ENCODE measurements at regions of chr1 and their contacts with region 1.

Region 1: DNA sequence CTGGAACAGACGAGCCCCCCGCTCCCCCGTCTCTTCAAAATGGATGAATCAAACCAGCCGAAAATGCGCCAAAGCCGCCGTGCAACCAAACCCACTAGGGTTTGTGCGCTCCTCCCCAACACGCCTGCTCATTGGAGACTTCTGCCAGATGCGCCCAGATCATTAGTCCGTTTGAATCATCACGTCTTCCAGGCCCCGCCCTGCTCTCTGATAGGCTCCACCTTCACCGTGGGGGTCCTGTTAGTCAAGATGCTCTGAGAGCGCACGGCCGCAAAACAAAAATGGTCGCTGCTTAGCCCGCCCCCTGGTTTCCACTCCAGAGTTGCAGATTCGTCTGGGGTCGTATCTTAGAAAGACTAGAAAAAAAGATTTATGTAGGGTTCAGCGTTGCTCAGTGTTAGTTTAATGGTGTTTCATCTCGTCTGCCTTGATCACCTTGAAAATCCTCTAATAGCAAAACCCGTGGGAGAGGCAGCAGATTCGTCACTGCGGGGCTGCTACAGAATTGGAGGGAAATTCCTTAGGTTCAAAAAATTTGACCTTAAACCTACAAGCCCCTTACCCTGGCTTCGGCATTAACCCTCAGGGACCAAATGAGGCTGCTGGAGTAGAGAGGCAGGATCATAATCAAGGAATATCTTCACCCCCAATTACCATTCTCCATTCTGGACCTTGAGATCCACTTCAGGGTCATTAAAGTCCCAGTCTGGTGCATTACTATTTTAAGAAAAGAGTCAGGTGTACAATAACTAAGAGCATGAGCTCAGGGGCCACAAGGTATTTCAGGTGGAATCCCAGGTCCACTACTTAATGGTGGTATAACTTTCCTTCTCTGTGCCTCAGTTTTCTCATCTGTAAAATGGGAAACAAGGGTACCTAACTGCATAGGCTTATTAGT is at the start of gene NUCKS1:
- DNase-seq: peak; percentile 90
- ATAC-seq: peak; percentile 84
- H3K4me3 Mint-ChIP-seq: peak within 1 kb of the TSS; percentile 99
- H3K27ac Mint-ChIP-seq: peak within 1 kb of the TSS; percentile 100
- H3K4me1 Mint-ChIP-seq: peaks cover 37% of the 10 kb centered on the region
- H3K27me3 Mint-ChIP-seq: no peaks in the 10 kb centered on the region
- total RNA-seq, gene NUCKS1: 200 to 211 TPM

Region 2: DNA sequence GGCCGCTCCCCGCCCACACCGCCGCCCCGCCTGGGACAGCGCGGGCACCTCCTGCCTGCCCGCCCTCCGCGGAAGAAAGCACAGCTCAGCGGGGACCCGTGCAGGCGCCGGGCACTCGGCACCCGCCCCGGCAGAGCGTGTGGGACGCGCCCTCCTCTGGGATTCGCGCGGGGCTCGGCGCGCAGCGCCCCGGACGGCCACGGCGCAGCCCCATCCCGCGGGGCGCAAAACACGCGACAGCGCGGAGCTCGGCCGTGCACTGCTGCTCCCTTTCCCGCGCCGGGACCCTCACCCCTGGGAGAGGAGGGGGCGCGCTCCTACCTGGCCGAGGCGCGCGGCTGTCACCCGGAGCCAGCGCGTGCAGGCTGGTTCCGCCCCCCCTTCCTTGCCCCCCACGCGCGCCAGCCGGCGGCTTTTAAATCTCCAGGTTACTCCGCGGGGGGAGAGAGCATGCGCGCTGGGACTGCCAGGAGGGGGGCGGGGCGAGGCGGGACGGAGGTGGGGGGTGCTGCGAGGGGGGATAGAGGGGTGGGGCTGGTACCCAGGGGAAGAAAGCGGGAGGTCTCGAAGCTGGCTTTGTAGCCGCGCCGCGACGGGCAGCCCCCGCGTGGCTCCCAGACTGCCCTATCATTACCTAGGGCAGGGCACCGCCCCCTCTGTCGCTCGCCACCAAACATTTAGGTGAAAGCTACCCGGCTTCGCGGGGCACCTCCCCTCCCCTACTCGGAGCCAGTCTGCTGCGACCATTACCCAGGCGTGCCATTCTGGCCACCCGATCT is 70.1 kb before region 1 on chr1 and contains the start of gene SLC45A3:
- POLR2A ChIA-PET with region 1: no interaction called
- DNase-seq: peak; percentile 59
- ATAC-seq: peak; percentile 77
- H3K4me3 Mint-ChIP-seq: peak within 1 kb of the TSS; percentile 84
- H3K27ac Mint-ChIP-seq: no peak within 1 kb of the TSS
- H3K4me1 Mint-ChIP-seq: peaks cover 7% of the 10 kb centered on the region
- H3K27me3 Mint-ChIP-seq: peaks cover 27% of the 10 kb centered on the region
- total RNA-seq, gene SLC45A3: 0.17 to 0.31 TPM

Region 3: GRCh38 chr1:205782627-205783412 is 32.4 kb after region 1 on chr1:
- POLR2A ChIA-PET with region 1: interaction called, 43 read pairs
- DNase-seq: no peak
- ATAC-seq: peak; percentile 97
- H3K4me3 Mint-ChIP-seq: peak overlapping the region; percentile 46
- H3K27ac Mint-ChIP-seq: peak overlapping the region; percentile 83
- H3K4me1 Mint-ChIP-seq: peaks cover 14% of the 10 kb centered on the region
- H3K27me3 Mint-ChIP-seq: peaks cover 2% of the 10 kb centered on the region

Measured in activated naive CD8-positive, alpha-beta T cell treated with anti-CD3 and anti-CD28 coated beads, Interleukin-2, amount 10 ng/mL, durations not matched to agents 7 days and 5 days (primary cell).